WTC11 (cell line): ENCODE measurements at regions of chr19 and their contacts with region 1.

Region 1: GRCh38 chr19:19900729-19901444 is at the start of gene ZNF93:
- DNase-seq: peak; percentile 94
- ATAC-seq: peak; percentile 94
- H3K4me3 Mint-ChIP-seq: peak within 1 kb of the TSS; percentile 97
- H3K27ac Mint-ChIP-seq: peak within 1 kb of the TSS; percentile 100
- H3K4me1 Mint-ChIP-seq: peaks cover 51% of the 10 kb centered on the region
- H3K27me3 Mint-ChIP-seq: no peaks in the 10 kb centered on the region
- CTCF ChIP-seq: no peak
- total RNA-seq, gene ZNF93: 37.8 to 47.4 TPM (median 41.7 TPM) in 3 replicates

Region 2: GRCh38 chr19:19663256-19664038 is 237.4 kb before region 1 on chr19 and contains the start of gene ATP13A1:
- CTCF ChIA-PET with region 1: no interaction called
- POLR2A ChIA-PET with region 1: interaction called, 11 read pairs
- DNase-seq: peak; percentile 88
- ATAC-seq: peak; percentile 77
- H3K4me3 Mint-ChIP-seq: peak within 1 kb of the TSS; percentile 94
- H3K27ac Mint-ChIP-seq: peak within 1 kb of the TSS; percentile 97
- H3K4me1 Mint-ChIP-seq: peaks cover 23% of the 10 kb centered on the region
- H3K27me3 Mint-ChIP-seq: no peaks in the 10 kb centered on the region; the same call in 1 of the 2 replicates
- CTCF ChIP-seq: no peak
- total RNA-seq, gene ATP13A1: 63.4 to 82.6 TPM (median 64.3 TPM) in 3 replicates

Region 3: DNA sequence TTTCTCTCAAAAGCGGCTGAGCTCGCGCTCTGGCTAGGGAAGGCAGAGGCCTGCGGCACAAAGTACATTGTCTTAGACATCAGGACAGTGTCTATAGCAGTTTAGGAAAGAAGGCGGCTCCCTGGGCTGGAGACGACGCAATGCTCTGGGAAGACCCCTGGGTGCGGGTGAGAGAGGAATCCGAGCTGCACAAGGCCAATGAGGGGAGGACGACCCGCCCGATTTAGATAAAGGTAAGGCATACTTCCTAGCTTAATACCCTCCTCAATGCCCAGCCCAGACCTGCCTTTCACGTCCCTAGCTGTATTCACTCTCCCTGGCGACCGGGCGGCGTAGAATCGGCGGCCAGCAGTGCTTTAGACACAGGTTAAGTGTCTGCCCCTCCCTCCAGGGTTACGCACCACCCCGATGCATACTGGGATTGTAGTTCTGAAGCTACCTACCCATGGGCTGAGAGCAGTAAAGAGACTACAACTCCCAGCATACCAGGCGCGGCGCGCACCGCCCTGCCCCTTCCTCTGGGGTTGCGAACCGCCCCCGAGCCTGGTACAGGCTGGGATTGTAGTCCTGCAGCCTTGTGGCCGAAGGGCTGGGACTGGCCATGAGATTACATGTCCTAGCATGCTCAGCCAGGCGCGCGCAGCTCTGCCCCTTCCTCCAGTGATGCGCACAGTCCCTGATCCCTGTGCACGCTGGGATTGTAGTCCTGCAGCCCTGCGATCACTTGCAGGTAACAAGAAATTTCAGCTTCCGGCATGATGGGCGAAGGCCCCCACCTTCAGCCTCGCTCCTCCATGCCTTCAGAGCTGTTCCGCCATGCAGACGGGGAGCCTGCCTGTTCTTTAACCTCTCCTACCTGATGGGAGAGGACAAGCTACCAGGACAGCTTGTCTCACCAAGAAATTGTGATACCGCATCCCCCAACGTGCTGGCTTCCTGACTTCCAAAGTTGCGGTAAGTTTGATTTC is 124.6 kb before region 1 on chr19:
- CTCF ChIA-PET with region 1: no interaction called
- POLR2A ChIA-PET with region 1: interaction called, 17 read pairs
- DNase-seq: peak; percentile 99
- ATAC-seq: peak; percentile 96
- H3K4me3 Mint-ChIP-seq: peak overlapping the region; percentile 98
- H3K27ac Mint-ChIP-seq: peak overlapping the region; percentile 95
- H3K4me1 Mint-ChIP-seq: peaks cover 25% of the 10 kb centered on the region
- H3K27me3 Mint-ChIP-seq: no peaks in the 10 kb centered on the region
- CTCF ChIP-seq: no peak

Region 4: DNA sequence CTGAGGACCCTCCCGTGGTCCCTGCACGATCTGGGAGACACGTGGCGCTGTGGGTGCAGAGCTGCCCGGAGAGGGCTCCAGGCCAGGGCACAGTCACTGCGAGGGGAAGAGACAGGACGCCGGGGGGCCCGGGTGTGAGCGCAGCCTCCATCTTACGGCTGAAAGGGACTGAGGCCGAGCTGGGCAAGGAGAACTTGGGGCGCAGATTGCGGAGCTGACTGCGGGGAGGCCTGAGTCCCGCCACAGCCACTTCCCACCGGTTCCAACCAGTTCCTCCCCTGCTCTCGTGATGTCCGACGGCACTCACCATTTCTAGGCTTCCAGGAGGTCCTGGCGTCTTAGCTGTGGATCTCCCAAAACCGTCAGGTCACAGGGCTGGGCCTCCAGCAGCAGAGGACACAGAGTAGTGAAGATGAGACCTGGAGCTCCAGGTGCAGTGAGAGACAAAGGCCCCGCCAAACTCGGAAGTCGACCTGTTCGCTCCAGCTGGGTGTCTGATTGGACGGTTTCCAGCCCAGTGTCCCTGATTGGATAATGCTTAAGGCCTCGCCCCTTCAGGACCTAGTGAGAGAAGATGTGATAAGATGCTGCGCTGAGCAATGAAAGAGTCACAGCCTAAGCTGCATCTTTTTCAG is 40.0 kb before region 1 on chr19:
- CTCF ChIA-PET with region 1: interaction called, 9 read pairs
- POLR2A ChIA-PET with region 1: interaction called, 70 read pairs
- DNase-seq: peak; percentile 88
- ATAC-seq: peak; percentile 87
- H3K4me3 Mint-ChIP-seq: peak overlapping the region; percentile 96
- H3K27ac Mint-ChIP-seq: peak overlapping the region; percentile 99
- H3K4me1 Mint-ChIP-seq: peaks cover 24% of the 10 kb centered on the region
- H3K27me3 Mint-ChIP-seq: no peaks in the 10 kb centered on the region; the same call in 1 of the 2 replicates
- CTCF ChIP-seq: no peak

Region 5: DNA sequence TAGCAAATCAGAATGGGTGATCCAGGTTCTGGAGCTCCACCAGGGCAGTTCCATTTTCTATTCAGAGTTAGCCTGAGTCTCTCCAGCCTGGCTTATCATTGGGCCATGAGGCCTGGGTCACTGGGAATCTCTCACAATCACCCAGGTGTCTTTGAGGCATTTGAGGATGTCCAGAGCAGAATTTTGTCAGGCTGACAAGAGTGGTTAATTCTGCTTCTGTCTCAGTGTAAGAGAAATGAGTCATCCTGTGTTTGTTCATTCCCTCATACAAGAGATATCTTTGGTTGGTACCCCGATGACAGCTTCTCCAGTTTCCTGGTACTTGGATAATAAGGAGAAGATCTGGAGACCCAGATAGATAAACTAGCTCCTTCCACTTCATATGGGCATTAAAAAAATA is 10.3 kb after region 1 on chr19:
- CTCF ChIA-PET with region 1: interaction called, 3 read pairs
- POLR2A ChIA-PET with region 1: interaction called, 25 read pairs
- DNase-seq: no peak
- ATAC-seq: no peak
- H3K4me3 Mint-ChIP-seq: no peak overlapping the region
- H3K27ac Mint-ChIP-seq: peak overlapping the region; percentile 80; the same call in 1 of the 2 replicates
- H3K4me1 Mint-ChIP-seq: peaks cover 34% of the 10 kb centered on the region
- H3K27me3 Mint-ChIP-seq: no peaks in the 10 kb centered on the region
- CTCF ChIP-seq: no peak